ENCODE measurements at regions of chr16 and their contacts with region 1.

Region 1: DNA sequence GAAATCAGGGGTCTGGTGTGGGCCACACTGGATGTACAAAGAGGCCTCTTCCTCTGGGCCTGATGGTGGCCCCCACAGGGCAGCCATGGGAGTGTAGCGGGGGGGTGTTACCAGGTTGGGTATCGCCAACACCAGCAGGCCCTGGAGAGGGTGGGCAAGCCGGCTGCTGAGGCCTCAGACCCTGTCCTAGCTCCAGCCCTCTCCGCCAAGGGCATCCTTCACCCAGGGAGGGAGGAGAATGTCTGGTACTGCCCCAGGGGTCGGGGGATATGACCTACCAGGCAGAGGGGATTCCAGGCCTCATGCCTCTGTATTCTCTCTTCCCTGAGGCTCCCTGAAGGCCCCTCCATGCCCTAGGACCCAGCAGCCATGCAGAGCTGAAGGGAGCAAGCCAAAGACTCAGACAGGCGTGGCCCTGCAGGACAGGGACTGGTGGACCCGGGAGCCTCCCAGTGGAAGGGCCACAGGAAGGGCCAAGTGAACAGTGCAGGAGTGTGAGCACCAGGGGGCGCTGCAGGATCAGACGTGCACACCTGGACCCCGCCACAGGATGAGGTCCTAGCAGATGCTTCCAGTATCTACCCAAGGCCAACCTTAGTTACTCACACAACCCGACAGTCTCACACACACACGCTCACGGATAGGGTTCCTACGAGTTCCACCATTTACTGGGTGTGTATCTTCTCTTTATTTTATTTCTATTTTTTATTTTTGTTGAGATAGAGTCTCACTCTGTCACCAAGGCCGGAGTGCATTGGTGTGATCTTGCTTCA is 10.9 kb upstream of the CES4A start:
- DNase-seq: no peak
- H3K4me3 ChIP-seq: no peak overlapping the region
- CTCF ChIP-seq: peak; percentile 98

Region 2: GRCh38 chr16:66961065-66961744 is 16.3 kb before region 1 on chr16 and contains the start of gene CES3:
- CTCF ChIA-PET with region 1: interaction called, 46 read pairs
- POLR2A ChIA-PET with region 1: no interaction called
- DNase-seq: no peak
- H3K4me3 ChIP-seq: no peak within 1 kb of the TSS
- CTCF ChIP-seq: peak; percentile 84

Region 3: GRCh38 chr16:66988197-66988788 is 10.8 kb after region 1 on chr16 and contains the start of gene CES4A:
- CTCF ChIA-PET with region 1: interaction called, 50 read pairs
- POLR2A ChIA-PET with region 1: no interaction called
- DNase-seq: no peak
- H3K4me3 ChIP-seq: no peak within 1 kb of the TSS
- CTCF ChIP-seq: no peak

Region 4: DNA sequence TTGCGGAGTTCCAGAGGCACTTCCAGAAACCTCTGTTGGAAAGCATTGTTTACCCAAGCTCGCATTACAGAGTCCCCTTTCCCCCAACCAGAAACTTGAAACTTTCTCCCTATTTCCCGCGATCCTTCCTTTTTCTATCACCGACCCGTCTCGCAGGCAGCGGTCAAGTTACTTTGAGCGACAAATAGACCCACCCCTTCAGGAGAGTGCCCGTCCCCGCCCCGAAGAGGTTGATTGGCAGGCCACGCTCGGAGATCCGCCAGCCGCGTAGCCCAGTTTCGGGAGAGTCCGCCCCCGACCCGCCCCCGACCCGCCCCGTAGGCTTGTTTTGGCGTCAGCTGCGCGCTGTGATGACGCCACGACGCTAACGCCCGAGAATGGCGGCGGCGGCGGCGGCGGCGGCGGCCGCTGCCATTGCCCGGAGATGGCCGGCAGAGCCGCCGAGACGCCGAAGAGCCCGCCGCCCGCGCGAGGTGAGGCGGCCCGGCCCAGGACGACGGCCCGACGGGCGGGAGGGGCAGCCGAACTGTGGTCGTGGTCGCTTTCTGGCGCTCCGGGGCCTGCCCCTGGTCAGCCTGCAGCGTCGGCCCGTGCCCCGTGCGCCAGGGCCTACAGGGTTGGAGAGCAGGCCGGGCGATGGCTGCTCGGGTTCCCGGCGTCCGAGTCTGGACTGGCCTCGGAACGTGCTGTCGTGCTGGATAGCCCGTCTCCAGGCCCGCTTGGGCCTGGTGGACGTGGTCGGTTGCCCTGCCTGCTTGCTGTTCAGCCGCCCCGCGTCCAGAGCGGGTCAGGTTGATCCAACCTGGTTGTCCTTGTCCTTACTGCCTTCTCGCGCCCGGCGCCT is 915.6 kb after region 1 on chr16 and contains the start of gene PSKH1:
- CTCF ChIA-PET with region 1: no interaction called
- POLR2A ChIA-PET with region 1: no interaction called
- DNase-seq: peak; percentile 44
- H3K4me3 ChIP-seq: peak within 1 kb of the TSS; percentile 91
- CTCF ChIP-seq: no peak

Measured in AG04449 (cell line).